ENCODE measurements at regions of chr7 and their contacts with region 1.

Region 1: GRCh38 chr7:149598721-149599306 is 101.2 kb upstream of the ZNF746 start:
- DNase-seq: peak; percentile 33
- H3K4me3 Mint-ChIP-seq: no peak overlapping the region
- H3K27ac Mint-ChIP-seq: no peak overlapping the region
- H3K4me1 Mint-ChIP-seq: peaks cover 30% of the 10 kb centered on the region
- H3K27me3 Mint-ChIP-seq: peaks cover 14% of the 10 kb centered on the region

Region 2: DNA sequence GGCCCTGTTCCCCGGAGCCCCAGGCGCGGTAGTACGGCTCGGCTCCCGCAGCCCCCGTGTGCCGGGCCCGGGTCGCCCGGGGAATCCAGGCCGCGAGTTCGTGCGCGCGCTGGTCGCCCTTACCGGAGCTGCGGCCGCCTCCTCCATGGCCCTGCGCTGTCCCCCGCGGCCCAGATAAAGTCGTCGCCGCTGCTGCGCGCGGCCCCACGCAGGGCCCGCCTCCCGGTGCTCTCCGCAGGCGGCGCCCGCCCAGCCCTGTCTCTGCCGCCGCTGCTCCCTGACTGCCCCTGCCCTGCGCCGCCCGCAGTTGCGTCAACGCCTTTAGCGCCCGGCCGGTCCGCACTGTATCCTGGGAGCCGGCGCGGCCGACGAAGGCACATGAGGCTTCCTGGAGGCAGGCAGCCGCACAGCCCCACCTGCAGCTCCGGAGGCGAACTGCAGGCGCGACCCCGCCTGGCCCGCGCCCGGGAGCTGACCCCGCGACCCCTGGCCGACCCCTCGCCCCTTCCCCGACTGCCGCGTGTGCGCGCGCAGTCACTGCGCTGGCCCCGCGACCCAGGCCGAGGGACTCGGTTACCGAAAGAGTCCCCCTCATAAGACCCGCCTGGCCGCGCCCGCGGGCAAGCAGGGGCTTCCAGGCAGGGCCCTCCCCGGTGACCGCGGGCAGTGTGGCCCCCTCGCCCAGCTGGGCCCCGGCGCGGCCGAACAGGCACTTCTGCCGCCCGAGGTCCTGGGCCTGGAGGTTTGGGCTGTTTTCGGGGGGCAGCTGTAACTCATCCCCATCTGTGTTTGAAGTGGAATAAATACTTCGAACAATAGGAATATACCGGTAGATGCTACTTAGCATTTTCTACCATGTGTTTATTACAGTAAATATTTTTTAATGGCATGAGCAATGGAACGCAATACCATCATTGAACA is 25.9 kb after region 1 on chr7:
- CTCF ChIA-PET with region 1: interaction called, 16 read pairs
- POLR2A ChIA-PET with region 1: interaction called, 6 read pairs
- DNase-seq: peak; percentile 94
- H3K4me3 Mint-ChIP-seq: peak overlapping the region; percentile 95
- H3K27ac Mint-ChIP-seq: peak overlapping the region; percentile 72
- H3K4me1 Mint-ChIP-seq: peaks cover 41% of the 10 kb centered on the region
- H3K27me3 Mint-ChIP-seq: peaks cover 24% of the 10 kb centered on the region

Region 3: GRCh38 chr7:149669121-149669818 is 70.5 kb after region 1 on chr7:
- CTCF ChIA-PET with region 1: no interaction called
- POLR2A ChIA-PET with region 1: no interaction called
- DNase-seq: no peak
- H3K4me3 Mint-ChIP-seq: no peak overlapping the region
- H3K27ac Mint-ChIP-seq: no peak overlapping the region
- H3K4me1 Mint-ChIP-seq: peaks cover 2% of the 10 kb centered on the region
- H3K27me3 Mint-ChIP-seq: peaks cover 57% of the 10 kb centered on the region

Region 4: GRCh38 chr7:149680331-149681025 is 81.7 kb after region 1 on chr7:
- CTCF ChIA-PET with region 1: no interaction called
- POLR2A ChIA-PET with region 1: no interaction called
- DNase-seq: no peak
- H3K4me3 Mint-ChIP-seq: no peak overlapping the region
- H3K27ac Mint-ChIP-seq: no peak overlapping the region
- H3K4me1 Mint-ChIP-seq: no peaks in the 10 kb centered on the region
- H3K27me3 Mint-ChIP-seq: peaks cover 40% of the 10 kb centered on the region

Region 5: GRCh38 chr7:149714050-149714909 is 115.5 kb after region 1 on chr7:
- CTCF ChIA-PET with region 1: no interaction called
- POLR2A ChIA-PET with region 1: no interaction called
- DNase-seq: peak; percentile 92
- H3K4me3 Mint-ChIP-seq: peak overlapping the region; percentile 71
- H3K27ac Mint-ChIP-seq: no peak overlapping the region
- H3K4me1 Mint-ChIP-seq: peaks cover 17% of the 10 kb centered on the region
- H3K27me3 Mint-ChIP-seq: no peaks in the 10 kb centered on the region